ENCODE measurements at regions of chr1 and their contacts with region 1.

Region 1: GRCh38 chr1:153946622-153947241 is at the start of gene DENND4B:
- DNase-seq: peak; percentile 99
- H3K4me3 ChIP-seq: peak within 1 kb of the TSS; percentile 85 to 91
- H3K27ac ChIP-seq: peak within 1 kb of the TSS; percentile 60 to 89
- H3K4me1 ChIP-seq: peaks cover 3 to 17% of the 10 kb centered on the region in 2 experiments; a peak in 2 of 4 replicates
- H3K27me3 ChIP-seq: no peaks in the 10 kb centered on the region
- CTCF ChIP-seq: peak; percentile 76
- EP300 ChIP-seq: 0 out of 4 replicates have a peak, but pooled peaks of 1 of the 2 experiments have one; percentile 20
- RAD21 ChIP-seq: peak; percentile 62
- polyA plus RNA-seq, gene DENND4B: 27.3 and 29.6 TPM in 2 replicates

Region 2: DNA sequence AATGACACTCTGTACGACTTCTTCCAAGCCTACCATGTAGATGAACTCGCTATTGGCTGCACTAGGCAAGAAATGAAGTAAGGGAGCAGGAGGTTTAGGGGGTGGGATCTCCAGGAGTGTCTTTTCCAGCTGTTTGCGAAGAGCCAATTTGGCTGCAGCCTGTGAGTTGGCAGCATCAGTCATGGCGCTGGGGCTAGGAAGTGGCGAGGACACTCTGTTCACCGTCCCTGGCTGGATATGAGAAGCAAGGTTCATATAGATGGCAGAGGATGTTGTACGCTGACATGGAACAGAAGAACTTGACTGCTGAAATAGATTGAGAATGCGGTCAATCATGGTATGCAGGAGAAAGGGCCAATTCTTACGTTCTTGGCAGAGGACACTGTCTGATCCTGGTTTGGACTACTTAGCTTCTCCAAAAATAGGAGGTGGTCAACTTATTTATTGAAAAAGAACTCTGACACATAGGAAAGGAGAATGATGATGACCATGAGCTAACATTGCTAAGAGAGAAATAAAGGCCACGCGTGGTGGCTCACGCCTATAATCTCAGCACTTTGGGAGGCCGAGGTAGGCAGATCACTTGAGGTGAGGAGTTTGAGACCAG is 130.3 kb before region 1 on chr1:
- CTCF ChIA-PET with region 1: interaction called, 11 read pairs
- POLR2A ChIA-PET with region 1: no interaction called
- DNase-seq: no peak
- H3K4me3 ChIP-seq: no peak overlapping the region
- H3K27ac ChIP-seq: no peak overlapping the region
- H3K4me1 ChIP-seq: no peaks in the 10 kb centered on the region
- H3K27me3 ChIP-seq: no peaks in the 10 kb centered on the region
- CTCF ChIP-seq: no peak
- EP300 ChIP-seq: no peak
- RAD21 ChIP-seq: no peak

Region 3: DNA sequence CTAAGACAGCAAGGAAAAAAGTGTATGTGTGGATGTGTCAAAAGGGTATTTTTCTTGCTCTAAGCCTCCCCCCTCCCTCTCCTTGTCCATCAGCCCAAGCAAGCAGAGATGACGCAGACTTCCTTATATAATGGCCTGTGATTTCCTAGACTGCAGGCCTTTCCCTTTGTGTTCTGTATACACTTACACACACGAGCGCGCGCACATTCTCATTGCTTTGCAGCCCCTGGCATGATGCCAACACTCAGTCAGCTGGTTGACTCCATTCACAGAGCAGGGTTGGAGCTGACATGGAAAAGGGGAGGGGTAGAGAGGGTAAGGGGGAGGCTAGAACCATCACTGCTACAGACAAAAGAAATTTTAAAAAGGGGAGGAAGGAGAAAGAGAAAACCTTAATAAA is 65.8 kb before region 1 on chr1:
- CTCF ChIA-PET with region 1: interaction called, 16 read pairs
- POLR2A ChIA-PET with region 1: interaction called, 3 read pairs
- DNase-seq: peak; percentile 81
- H3K4me3 ChIP-seq: peak overlapping the region; percentile 36 to 56
- H3K27ac ChIP-seq: peak overlapping the region; percentile 87 to 90
- H3K4me1 ChIP-seq: peaks cover 15 to 16% of the 10 kb centered on the region in 2 experiments
- H3K27me3 ChIP-seq: no peaks in the 10 kb centered on the region
- CTCF ChIP-seq: no peak
- EP300 ChIP-seq: no peak; a peak in 1 of 4 replicates
- RAD21 ChIP-seq: no peak

Region 4: DNA sequence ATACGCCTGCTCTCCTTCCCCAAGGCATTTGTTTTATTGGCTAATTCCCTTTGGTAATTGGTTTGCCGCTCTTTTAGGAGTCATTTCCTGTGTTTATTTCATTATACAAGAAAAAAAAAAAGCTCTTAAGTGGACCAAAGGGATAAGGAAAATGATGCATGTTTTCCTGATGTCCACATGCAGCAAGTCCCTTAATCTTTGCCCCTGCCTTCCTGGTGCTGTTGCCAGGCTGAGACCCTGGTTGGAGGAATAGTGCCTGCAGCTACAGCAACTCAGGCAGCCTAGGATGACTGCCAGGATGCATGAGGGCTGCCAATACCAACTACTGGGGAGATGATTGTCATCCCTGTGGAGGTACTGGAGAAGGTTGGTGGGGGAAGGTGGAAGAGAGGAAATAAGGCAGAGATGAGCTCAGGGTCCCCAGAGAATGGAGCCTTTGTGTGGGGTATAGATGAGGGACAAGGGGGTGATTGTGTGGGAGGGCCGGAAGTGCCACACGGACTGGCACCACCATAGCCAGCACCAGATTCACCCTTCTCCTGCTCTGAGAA is 17.9 kb before region 1 on chr1:
- CTCF ChIA-PET with region 1: interaction called, 46 read pairs
- POLR2A ChIA-PET with region 1: interaction called, 6 read pairs
- DNase-seq: peak; percentile 82
- H3K4me3 ChIP-seq: no peak overlapping the region
- H3K27ac ChIP-seq: peak overlapping the region in 1 of 2 experiments; percentile 88; a peak in 2 of 4 replicates
- H3K4me1 ChIP-seq: peaks cover 5 to 21% of the 10 kb centered on the region in 2 experiments; a peak in 2 of 4 replicates
- H3K27me3 ChIP-seq: no peaks in the 10 kb centered on the region
- CTCF ChIP-seq: no peak
- EP300 ChIP-seq: peak in 1 of 2 experiments; percentile 74; a peak in 1 of 4 replicates
- RAD21 ChIP-seq: no peak

Region 5: DNA sequence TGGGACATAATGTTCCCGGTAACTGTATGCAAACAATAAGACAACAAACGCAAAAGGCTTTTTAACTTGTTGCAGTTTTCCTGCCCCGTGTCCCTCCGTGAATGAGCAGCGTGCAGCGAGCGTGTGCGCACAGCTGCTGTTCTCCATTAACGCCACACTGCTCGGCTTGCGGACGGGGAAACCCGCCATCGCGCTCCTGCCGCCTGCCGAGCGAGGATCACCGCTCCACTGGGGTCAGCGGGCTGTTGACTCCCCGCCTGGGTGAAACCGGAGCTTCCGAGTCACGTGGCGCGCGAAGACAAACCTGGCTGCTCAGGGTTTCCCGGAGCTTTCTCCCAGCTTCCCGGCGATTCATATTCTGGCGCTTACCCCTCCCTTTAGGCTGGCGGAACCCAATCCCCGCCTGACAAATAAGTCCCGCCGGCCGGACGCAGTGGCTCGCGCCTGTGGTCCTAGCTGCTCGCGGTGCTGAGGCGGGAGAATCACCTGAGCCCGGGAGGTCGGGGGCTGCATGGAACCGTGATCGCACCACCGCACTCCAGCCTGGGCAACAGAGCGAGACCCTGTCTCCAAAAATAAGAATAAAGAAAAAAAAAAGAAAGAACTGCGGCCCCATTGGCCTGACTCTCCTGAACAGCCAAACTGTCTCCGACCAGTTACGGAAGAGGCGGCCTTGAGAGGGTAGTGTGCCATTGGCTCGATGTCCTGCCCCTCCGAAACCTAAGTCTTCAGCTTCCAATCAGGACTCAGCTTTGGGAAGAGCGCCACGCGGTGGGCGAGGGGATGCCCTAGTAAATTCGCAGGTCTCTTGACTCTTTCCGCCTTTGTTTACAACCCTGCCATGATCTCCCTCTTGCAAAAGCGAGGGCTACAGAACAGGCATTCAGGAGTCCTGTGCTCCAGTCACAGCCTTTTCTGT is 20.6 kb after region 1 on chr1 and contains the start of gene CREB3L4:
- CTCF ChIA-PET with region 1: interaction called, 44 read pairs
- POLR2A ChIA-PET with region 1: interaction called, 9 read pairs
- DNase-seq: peak; percentile 87
- H3K4me3 ChIP-seq: peak within 1 kb of the TSS; percentile 61 to 85
- H3K27ac ChIP-seq: peak within 1 kb of the TSS; percentile 77 to 87
- H3K4me1 ChIP-seq: peaks cover 0 to 26% of the 10 kb centered on the region in 2 experiments; a peak in 2 of 4 replicates
- H3K27me3 ChIP-seq: no peaks in the 10 kb centered on the region
- CTCF ChIP-seq: peak; percentile 49
- EP300 ChIP-seq: 0 out of 4 replicates have a peak, but pooled peaks of 1 of the 2 experiments have one; percentile 6
- RAD21 ChIP-seq: peak; percentile 32; the same call in 1 of the 2 replicates
- polyA plus RNA-seq, gene CREB3L4: 12.8 and 16.6 TPM in 2 replicates

Measured in SK-N-SH (cell line).